Activated T-helper 2 cell treated with anti-CD3 and anti-CD28 coated beads, Interferon-gamma antibody, Interleukin-2, Interleukin-4, amounts not matched to agents 10 μg/mL and 5 μg/mL and 100 μg/mL, durations not matched to agents 14 hours and 24 hours and 36 hours (primary cell): ENCODE measurements at regions of chr2 and their contacts with region 1.

Region 1: GRCh38 chr2:197804049-197804757 is at the start of gene PLCL1:
- DNase-seq: peak; percentile 90
- H3K4me3 Mint-ChIP-seq: peak within 1 kb of the TSS; percentile 92
- H3K27ac Mint-ChIP-seq: peak within 1 kb of the TSS; percentile 50
- H3K4me1 Mint-ChIP-seq: peaks cover 42% of the 10 kb centered on the region
- H3K27me3 Mint-ChIP-seq: peaks cover 26% of the 10 kb centered on the region
- total RNA-seq, gene PLCL1: 1.8 and 2.0 TPM in 2 replicates

Region 2: GRCh38 chr2:197838036-197838435 is 33.8 kb after region 1 on chr2:
- intact Hi-C with region 1: loop called (anchors 1 kb)
- DNase-seq: no peak
- H3K4me3 Mint-ChIP-seq: peak overlapping the region; percentile 53
- H3K27ac Mint-ChIP-seq: peak overlapping the region; percentile 68
- H3K4me1 Mint-ChIP-seq: peaks cover 44% of the 10 kb centered on the region
- H3K27me3 Mint-ChIP-seq: peaks cover 4% of the 10 kb centered on the region

Region 3: DNA sequence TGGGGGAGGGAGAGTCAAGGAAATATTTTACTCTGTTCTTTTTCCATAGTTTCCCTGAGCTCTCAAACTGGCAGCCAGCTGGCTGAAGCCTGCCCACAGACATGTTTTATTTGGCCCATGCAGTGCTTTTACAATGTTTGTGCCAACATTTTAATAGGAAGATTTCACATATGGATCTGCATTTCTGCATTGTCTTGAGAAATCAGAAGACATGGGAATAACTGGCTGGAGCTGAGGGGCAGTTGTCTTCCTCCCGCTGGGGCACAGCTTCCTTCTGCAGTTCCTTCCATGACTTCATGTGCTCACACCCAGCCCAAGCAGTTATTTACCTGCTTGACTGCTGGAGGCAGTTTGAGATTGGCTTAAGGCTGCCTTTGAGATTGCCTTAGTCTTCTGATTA is 74.6 kb after region 1 on chr2:
- intact Hi-C with region 1: no loop called
- DNase-seq: no peak
- H3K4me3 Mint-ChIP-seq: no peak overlapping the region
- H3K27ac Mint-ChIP-seq: no peak overlapping the region
- H3K4me1 Mint-ChIP-seq: peaks cover 4% of the 10 kb centered on the region
- H3K27me3 Mint-ChIP-seq: no peaks in the 10 kb centered on the region

Region 4: DNA sequence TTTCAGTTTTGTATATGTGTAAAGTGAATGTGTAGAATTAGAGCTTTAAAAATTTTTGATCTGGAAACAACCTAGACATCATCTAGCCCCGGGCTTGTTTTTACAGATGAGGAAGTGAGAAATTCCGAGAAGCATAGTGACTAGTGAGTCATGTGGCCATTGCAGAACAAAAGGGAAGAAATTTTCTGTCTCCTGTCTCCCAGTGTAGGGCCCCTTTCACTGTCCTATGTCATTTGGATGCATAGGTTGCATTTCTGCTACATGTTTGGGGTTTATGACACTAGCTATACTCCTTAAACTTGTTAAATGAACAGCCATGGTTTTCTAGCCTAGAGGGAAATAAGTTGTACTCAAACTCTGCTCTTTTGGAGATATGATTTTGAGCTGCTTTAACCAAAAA is 84.8 kb after region 1 on chr2:
- intact Hi-C with region 1: loop called (anchors 1 kb)
- DNase-seq: no peak
- H3K4me3 Mint-ChIP-seq: no peak overlapping the region
- H3K27ac Mint-ChIP-seq: peak overlapping the region; percentile 77
- H3K4me1 Mint-ChIP-seq: peaks cover 37% of the 10 kb centered on the region
- H3K27me3 Mint-ChIP-seq: no peaks in the 10 kb centered on the region

Region 5: DNA sequence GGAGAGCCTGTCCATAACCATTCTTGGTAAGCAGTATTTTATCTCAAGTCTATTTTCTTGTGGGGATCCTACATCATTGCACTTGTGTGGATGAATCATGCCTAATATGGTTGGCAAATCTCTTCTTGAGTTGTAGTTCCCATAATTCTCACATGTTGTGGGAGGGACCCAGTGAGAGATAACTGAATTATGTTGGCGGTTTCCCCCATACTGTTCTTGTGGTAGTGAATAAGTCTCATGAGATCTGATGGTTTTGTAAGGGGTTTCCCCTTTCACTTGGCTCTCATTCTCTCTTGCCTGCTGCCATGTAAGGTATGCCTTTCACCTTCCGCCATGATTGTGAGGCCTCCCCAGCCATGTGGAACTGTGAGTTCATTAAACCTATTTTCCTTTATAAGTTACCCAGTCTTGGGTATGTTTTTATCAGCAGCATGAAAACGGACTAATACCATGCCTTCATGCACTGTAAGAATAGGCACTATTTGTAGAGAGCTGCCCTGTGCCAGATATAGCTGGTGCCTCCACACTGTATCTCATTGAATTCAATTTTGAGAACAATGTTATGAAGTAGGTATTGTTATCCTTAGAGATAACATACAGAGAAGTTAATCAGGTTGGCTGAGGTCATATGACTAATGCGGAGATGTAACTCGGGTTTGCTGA is 148.5 kb after region 1 on chr2:
- intact Hi-C with region 1: loop called (anchors 5 kb)
- DNase-seq: no peak
- H3K4me3 Mint-ChIP-seq: no peak overlapping the region
- H3K27ac Mint-ChIP-seq: no peak overlapping the region
- H3K4me1 Mint-ChIP-seq: peaks cover 20% of the 10 kb centered on the region
- H3K27me3 Mint-ChIP-seq: peaks cover 7% of the 10 kb centered on the region

Region 6: GRCh38 chr2:198028955-198029354 is 224.8 kb after region 1 on chr2:
- intact Hi-C with region 1: no loop called
- DNase-seq: no peak
- H3K4me3 Mint-ChIP-seq: no peak overlapping the region
- H3K27ac Mint-ChIP-seq: no peak overlapping the region
- H3K4me1 Mint-ChIP-seq: peaks cover 2% of the 10 kb centered on the region
- H3K27me3 Mint-ChIP-seq: no peaks in the 10 kb centered on the region

Region 7: DNA sequence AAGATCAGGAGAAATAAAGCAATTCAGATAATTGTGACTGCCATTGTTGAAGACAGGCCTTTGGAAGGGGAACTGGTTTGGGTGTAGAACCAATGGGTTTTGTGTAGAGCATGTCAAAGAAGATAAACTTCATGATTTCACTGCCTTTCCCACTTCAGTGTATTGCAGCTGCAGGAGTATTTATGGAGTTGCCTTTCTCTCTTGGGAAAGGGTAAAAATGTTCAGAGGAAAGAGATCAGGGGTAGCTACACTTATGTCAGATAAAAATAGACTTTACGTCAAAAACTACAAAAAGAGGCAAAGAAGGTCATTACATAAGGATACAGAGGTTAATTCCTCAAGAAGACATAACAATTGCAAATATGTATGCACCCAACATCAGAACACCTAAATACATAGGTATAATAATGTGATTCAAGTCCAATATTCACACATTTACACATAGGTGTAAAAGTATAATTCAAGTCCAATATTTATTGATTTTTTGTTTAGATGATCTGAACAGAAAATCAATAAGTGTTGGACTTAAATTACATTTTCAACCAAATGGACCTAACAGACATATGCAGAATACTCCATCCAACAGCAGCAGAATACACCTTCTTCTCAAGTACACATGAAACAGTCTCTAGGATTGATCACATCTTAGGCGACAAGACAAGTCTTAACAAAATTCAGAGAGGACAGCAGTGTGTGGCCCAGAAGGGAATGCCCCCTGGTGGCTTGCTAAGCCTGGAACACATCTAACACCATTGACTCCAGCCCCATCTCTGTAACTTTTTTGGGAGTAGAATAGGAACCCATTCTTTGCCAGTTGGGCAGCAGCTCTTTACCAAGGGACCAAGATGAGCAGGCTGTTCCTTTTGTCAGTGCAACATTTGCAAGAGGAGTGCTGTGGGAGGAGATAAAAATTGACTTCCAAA is 249.8 kb after region 1 on chr2:
- intact Hi-C with region 1: loop called (anchors 1 kb)
- DNase-seq: no peak
- H3K4me3 Mint-ChIP-seq: no peak overlapping the region
- H3K27ac Mint-ChIP-seq: no peak overlapping the region
- H3K4me1 Mint-ChIP-seq: peaks cover 5% of the 10 kb centered on the region
- H3K27me3 Mint-ChIP-seq: peaks cover 5% of the 10 kb centered on the region

Region 8: DNA sequence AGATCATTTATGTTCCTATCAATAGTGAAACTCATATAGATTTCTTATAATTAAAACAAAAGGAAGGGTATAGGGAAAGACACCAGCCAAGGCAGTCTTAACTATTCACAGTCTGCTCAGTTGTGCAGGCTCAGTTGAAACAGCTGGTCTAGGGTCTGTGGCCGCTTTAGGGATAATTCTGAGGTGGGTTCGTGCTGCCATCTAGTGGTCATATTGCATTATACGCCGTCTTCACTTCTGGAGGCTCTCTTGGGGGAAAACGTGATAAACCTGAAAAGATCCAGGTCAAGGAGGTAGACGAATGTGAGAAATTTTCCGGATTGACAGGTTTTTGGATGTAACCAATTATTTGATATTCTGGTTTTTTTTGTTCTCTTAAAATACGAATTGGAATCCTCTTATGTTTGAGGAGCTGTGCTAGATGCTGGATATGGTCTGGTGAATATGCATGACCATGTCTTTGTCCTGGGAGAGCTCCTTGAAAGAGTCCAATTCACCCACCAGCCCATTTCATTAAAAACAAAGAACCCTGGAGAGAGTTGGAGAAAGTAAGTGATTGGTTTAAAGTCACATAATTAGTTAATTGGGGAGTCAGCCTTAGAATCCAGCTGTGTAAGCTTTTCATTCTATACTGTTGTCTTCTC is 492.6 kb after region 1 on chr2:
- intact Hi-C with region 1: loop called (anchors 1 kb)
- DNase-seq: peak; percentile 21
- H3K4me3 Mint-ChIP-seq: no peak overlapping the region
- H3K27ac Mint-ChIP-seq: no peak overlapping the region
- H3K4me1 Mint-ChIP-seq: peaks cover 2% of the 10 kb centered on the region
- H3K27me3 Mint-ChIP-seq: peaks cover 3% of the 10 kb centered on the region